Endothelial cell of umbilical vein (primary cell): ENCODE measurements at regions of chr2 and their contacts with region 1.

Region 1: GRCh38 chr2:174395284-174395968 is at the start of gene SCRN3:
- DNase-seq: peak; percentile 85
- H3K4me3 ChIP-seq: peak within 1 kb of the TSS; percentile 69 to 91 (median 77)
- H3K27ac ChIP-seq: peak within 1 kb of the TSS; percentile 48
- H3K4me1 ChIP-seq: peaks cover 13% of the 10 kb centered on the region
- H3K27me3 ChIP-seq: no peaks in the 10 kb centered on the region
- CTCF ChIP-seq: no peak
- POLR2A ChIP-seq: peak; percentile 49
- total RNA-seq, gene SCRN3: 21.7 and 24.0 TPM in 2 replicates

Region 2: GRCh38 chr2:174436351-174436750 is 40.9 kb after region 1 on chr2:
- CTCF ChIA-PET with region 1: no interaction called
- POLR2A ChIA-PET with region 1: no interaction called
- dilution Hi-C with region 1: no loop called
- intact Hi-C with region 1: loop called (anchors 2 kb)
- DNase-seq: peak; percentile 77
- H3K4me3 ChIP-seq: no peak overlapping the region
- H3K27ac ChIP-seq: no peak overlapping the region
- H3K4me1 ChIP-seq: peaks cover 15% of the 10 kb centered on the region
- H3K27me3 ChIP-seq: no peaks in the 10 kb centered on the region
- CTCF ChIP-seq: no peak
- POLR2A ChIP-seq: no peak